Ovary (tissue), 10 donors: ENCODE measurements at regions of chr2 and their contacts with region 1.

Region 1: GRCh38 chr2:119366649-119367471 is at the starts of genes C2orf76 and DBI:
- DNase-seq: peak; percentile 90 to 95 (median 94)
- H3K4me3 ChIP-seq: peak within 1 kb of the TSS; percentile 76
- H3K27ac ChIP-seq: peak within 1 kb of the TSS; percentile 36 to 73
- H3K4me1 ChIP-seq: peaks cover 10% of the 10 kb centered on the region
- H3K27me3 ChIP-seq: no peaks in the 10 kb centered on the region
- CTCF ChIP-seq: no peak
- EP300 ChIP-seq: peak; percentile 61
- POLR2A ChIP-seq: peak; percentile 60
- total RNA-seq, gene C2orf76: 12.0 to 16.7 (median 13.2) TPM
- total RNA-seq, gene DBI: 35.5 to 90.2 (median 49.7) TPM

Region 2: DNA sequence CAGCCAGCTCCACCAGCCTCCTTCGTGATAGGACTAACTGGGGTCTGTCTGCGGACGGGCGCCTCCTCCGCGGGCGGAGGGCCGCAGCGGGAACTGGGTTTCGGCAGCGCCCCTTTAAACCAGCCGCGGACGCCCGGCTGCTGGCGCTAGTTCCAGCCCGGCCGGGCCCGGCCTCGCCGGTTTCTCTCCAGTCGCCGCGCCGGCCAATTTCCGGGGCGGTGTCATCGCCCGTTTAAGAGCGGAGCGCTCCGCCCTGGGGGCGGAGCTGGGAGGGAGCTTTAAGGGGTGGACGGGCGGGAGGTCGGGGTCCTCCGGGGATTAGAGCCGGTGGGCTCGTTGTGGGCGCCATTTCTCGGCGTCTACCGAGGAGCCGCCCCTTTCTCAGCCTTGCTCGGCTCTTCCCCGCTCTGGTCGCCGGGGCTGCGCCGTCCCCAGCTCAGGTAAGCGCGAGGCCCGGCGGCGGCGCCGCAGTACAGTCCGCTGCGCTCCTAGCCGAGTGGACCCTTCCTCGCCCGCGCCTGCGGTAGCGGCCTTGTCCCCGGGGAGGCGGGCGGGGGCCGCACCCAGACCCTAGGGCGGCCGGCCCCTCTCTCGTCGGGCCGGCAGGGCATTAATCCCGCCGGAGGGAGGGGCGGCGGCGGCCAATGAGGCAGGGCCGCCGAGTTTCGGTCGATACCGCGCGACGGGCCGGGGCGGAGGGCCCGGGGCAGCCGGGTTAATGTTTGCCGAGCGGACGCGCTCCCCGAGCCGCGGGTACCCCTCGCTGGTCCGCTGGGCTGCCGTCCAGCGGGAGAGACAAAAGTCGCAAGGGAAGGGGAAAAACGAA is 646.1 kb after region 1 on chr2 and contains the start of gene EPB41L5:
- intact Hi-C with region 1: loop called in 1 of 4 experiments (anchors 10 kb)
- DNase-seq: peak; percentile 90 to 95 (median 93)
- H3K4me3 ChIP-seq: peak within 1 kb of the TSS; percentile 81
- H3K27ac ChIP-seq: peak within 1 kb of the TSS; percentile 84 to 91
- H3K4me1 ChIP-seq: no peaks in the 10 kb centered on the region
- H3K27me3 ChIP-seq: no peaks in the 10 kb centered on the region
- CTCF ChIP-seq: peak in 1 of 3 donors; percentile 12
- EP300 ChIP-seq: no peak
- POLR2A ChIP-seq: peak; percentile 32
- total RNA-seq, gene EPB41L5: 20.5 to 39.5 (median 27.6) TPM

Region 3: DNA sequence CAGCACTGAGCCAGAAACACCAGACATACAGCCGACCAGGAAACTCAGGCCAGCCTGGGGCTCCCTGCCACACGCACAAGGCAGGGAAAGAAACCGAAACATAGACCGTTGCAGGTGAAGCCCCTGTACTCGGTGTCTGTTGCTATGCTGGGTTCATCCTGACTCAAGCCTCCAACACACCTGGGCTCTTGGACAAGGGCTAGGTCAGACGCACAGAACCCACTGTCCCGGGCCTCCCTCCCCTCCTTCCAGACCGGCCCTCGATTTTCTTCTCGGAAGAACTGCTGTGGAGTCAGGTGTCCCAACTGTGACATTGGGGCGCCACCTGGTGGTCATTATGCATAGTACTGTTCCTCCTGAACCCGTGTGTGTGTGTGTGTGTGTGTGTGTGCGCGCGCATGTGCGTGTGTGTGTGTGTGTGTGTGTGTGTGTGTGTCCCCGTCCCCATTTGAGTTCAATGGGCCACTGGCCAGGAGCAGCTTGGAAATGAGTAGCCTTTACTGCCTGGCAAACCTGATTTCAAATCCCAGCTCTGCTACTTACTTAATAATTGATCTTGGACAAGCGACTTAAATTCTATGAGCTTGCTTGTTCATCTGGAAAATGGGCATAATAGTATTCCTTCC is 1313.4 kb after region 1 on chr2:
- intact Hi-C with region 1: no loop called
- DNase-seq: peak; percentile 77 to 87 (median 85)
- H3K4me3 ChIP-seq: no peak overlapping the region
- H3K27ac ChIP-seq: no peak overlapping the region
- H3K4me1 ChIP-seq: peaks cover 2% of the 10 kb centered on the region
- H3K27me3 ChIP-seq: no peaks in the 10 kb centered on the region
- CTCF ChIP-seq: peak in 2 of 3 donors; percentile 79 to 82
- EP300 ChIP-seq: no peak
- POLR2A ChIP-seq: no peak